ENCODE measurements at regions of chr2 and their contacts with region 1.

Region 1: DNA sequence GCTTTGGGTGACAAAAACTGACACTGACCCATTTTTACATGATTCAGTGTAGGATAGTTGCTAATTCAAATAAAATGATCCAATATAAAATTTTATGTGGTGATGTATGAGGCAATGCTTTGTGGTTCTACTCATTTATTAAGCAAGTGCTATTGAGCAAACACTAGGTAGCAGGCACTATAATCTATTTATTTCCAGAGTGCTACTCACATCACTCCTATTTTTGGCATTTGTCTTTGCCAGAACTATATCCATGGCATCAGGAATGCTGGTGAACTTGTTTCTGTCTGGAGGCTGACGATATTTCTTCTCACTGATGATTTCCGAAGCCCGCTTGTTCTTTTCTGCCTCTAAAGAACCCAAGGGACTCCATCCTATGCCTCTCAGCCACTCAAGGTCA is 84.3 kb downstream of the NEB start:
- DNase-seq: no peak
- ATAC-seq: no peak
- H3K4me3 ChIP-seq: no peak overlapping the region
- H3K4me3 Mint-ChIP-seq: no peak overlapping the region
- H3K27ac ChIP-seq: no peak overlapping the region
- H3K27ac Mint-ChIP-seq: no peak overlapping the region
- H3K4me1 ChIP-seq: no peaks in the 10 kb centered on the region
- H3K4me1 Mint-ChIP-seq: no peaks in the 10 kb centered on the region
- H3K27me3 ChIP-seq: no peaks in the 10 kb centered on the region
- H3K27me3 Mint-ChIP-seq: no peaks in the 10 kb centered on the region
- CTCF ChIP-seq: no peak

Region 2: GRCh38 chr2:151609705-151610104 is 40.3 kb before region 1 on chr2:
- CTCF ChIA-PET with region 1: no interaction called
- POLR2A ChIA-PET with region 1: no interaction called
- intact Hi-C with region 1: loop called in 1 of 2 experiments (anchors 1 kb)
- DNase-seq: no peak
- ATAC-seq: no peak
- H3K4me3 ChIP-seq: no peak overlapping the region
- H3K4me3 Mint-ChIP-seq: no peak overlapping the region
- H3K27ac ChIP-seq: no peak overlapping the region
- H3K27ac Mint-ChIP-seq: no peak overlapping the region
- H3K4me1 ChIP-seq: peaks cover 2% of the 10 kb centered on the region
- H3K4me1 Mint-ChIP-seq: peaks cover 4% of the 10 kb centered on the region
- H3K27me3 ChIP-seq: no peaks in the 10 kb centered on the region
- H3K27me3 Mint-ChIP-seq: no peaks in the 10 kb centered on the region
- CTCF ChIP-seq: no peak